ENCODE measurements at regions of chr1 and their contacts with region 1.

Region 1: DNA sequence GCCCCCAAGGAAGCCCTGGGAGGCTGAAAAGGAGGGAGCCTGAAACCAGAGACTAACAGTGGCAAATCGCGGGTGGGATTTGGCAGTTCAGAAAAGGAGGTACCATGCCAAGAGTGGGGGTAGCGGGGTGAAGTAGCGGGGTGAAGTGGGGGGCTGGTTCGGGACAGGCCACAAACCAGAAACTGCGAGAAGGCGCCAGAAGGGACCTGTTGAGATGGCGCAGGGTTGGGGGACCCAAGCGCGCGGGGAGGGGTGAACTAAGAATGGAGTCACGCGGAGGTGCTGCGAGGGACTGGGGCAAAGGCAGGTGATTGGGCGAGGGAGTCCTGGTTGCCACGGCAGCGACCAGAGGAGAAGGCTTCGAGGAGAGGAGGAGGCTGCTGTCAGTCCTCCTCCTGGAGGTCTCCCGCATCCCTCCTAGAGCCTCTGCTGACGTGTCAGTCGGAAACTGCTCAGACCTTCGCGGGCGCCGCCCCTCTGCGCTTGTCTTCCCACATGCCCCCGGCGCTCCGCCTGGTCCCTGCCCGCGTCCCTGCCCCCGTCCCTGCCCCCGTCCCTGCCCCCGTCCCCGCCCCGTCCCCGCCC is 438 bp upstream of the MIA3 start:
- DNase-seq: no peak
- H3K4me3 ChIP-seq: peak overlapping the region; percentile 56 to 59
- H3K27ac ChIP-seq: peak overlapping the region; percentile 53 to 73
- H3K4me1 ChIP-seq: peaks cover 5 to 10% of the 10 kb centered on the region in 2 experiments; a peak in 2 of 4 replicates
- H3K27me3 ChIP-seq: no peaks in the 10 kb centered on the region
- CTCF ChIP-seq: no peak
- EP300 ChIP-seq: peak in 1 of 2 experiments; percentile 4; a peak in 1 of 4 replicates
- RAD21 ChIP-seq: no peak

Region 2: DNA sequence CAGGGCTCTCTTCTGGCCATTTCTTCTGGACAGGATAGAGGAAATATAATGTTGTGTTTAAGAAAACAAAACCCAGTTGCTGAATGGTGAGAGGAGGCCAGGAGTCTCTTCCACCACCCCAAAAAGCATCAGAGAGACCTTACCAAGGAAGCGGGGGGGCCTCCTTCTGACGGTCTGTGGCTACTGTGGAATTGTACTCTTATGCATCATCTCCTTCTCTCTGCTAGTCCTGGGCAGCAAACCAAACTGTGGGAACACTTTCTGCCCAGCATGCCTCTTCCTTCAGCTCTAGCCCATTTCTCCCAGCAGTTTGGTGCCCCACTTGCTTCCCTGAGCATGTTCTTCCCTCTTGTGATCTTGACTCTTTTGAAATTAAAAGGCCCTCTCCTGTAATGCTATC is 227.3 kb before region 1 on chr1:
- CTCF ChIA-PET with region 1: no interaction called
- POLR2A ChIA-PET with region 1: no interaction called
- DNase-seq: no peak
- H3K4me3 ChIP-seq: no peak overlapping the region
- H3K27ac ChIP-seq: no peak overlapping the region
- H3K4me1 ChIP-seq: no peaks in the 10 kb centered on the region; a peak in 1 of 4 replicates
- H3K27me3 ChIP-seq: no peaks in the 10 kb centered on the region
- CTCF ChIP-seq: no peak
- EP300 ChIP-seq: no peak
- RAD21 ChIP-seq: no peak

Region 3: GRCh38 chr1:222465211-222466041 is 152.0 kb before region 1 on chr1:
- CTCF ChIA-PET with region 1: interaction called, 26 read pairs
- POLR2A ChIA-PET with region 1: no interaction called
- DNase-seq: peak; percentile 96
- H3K4me3 ChIP-seq: peak overlapping the region; percentile 64 to 65
- H3K27ac ChIP-seq: peak overlapping the region; percentile 94 to 97
- H3K4me1 ChIP-seq: peaks cover 0 to 4% of the 10 kb centered on the region in 2 experiments; a peak in 2 of 4 replicates
- H3K27me3 ChIP-seq: no peaks in the 10 kb centered on the region
- CTCF ChIP-seq: peak; percentile 97
- EP300 ChIP-seq: no peak; a peak in 1 of 4 replicates
- RAD21 ChIP-seq: peak; percentile 95

Region 4: DNA sequence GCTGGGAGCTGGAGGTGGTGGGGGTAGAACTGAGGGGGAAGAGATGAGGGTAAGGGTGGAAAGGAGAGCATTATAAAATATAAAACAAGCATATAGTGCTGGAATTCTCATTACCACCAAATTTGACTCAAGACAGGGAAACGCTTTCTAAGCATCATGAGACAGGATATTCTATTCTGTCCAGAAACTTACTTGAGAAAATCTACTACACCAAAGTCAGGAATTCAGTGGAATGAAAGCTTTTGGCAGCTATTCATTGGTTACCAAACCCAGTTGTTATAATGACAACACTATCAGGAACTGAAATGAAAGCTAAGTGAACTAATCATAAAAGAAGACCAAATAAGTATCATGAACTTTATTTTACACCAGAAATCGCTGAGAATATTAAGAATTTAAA is 80.4 kb after region 1 on chr1:
- CTCF ChIA-PET with region 1: no interaction called
- POLR2A ChIA-PET with region 1: no interaction called
- DNase-seq: no peak
- H3K4me3 ChIP-seq: no peak overlapping the region
- H3K27ac ChIP-seq: peak overlapping the region in 1 of 2 experiments; percentile 32; a peak in 1 of 4 replicates
- H3K4me1 ChIP-seq: peaks cover 0 to 7% of the 10 kb centered on the region in 2 experiments; a peak in 2 of 4 replicates
- H3K27me3 ChIP-seq: no peaks in the 10 kb centered on the region
- CTCF ChIP-seq: no peak
- EP300 ChIP-seq: no peak
- RAD21 ChIP-seq: no peak

Measured in SK-N-SH (cell line).